Naive thymus-derived CD4-positive, alpha-beta T cell (primary cell): ENCODE measurements at regions of chr16 and their contacts with region 1.

Region 1: DNA sequence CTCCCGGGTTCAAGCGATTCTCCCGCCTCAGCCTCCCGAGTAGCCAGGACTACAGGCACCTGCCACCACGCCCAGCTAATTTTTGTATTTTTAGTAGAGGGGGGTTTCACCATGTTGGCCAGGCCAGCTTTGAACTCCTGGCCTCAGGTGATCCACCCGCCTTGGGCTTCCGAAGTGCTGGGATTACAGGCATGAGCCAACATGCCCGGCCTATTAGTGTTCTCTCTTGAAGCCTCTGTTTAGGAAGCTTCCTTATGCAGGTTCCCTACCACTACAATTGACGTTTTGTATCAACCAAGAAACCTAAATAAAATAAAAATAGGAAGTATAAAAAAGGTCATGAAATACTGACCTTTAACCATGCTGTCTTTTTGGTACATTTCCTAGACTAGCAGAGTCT is 16.0 kb downstream of the CHST5 start:
- DNase-seq: no peak
- ATAC-seq: no peak
- H3K4me3 ChIP-seq: no peak overlapping the region
- H3K4me3 Mint-ChIP-seq: no peak overlapping the region
- H3K27ac ChIP-seq: no peak overlapping the region
- H3K27ac Mint-ChIP-seq: no peak overlapping the region
- H3K4me1 ChIP-seq: peaks cover 0 to 3% of the 10 kb centered on the region in 2 donors
- H3K4me1 Mint-ChIP-seq: peaks cover 5 to 17% (median 13%) of the 10 kb centered on the region in 7 donors
- H3K27me3 ChIP-seq: no peaks in the 10 kb centered on the region
- H3K27me3 Mint-ChIP-seq: peaks cover 0 to 9% (median 0%) of the 10 kb centered on the region in 5 donors

Region 2: DNA sequence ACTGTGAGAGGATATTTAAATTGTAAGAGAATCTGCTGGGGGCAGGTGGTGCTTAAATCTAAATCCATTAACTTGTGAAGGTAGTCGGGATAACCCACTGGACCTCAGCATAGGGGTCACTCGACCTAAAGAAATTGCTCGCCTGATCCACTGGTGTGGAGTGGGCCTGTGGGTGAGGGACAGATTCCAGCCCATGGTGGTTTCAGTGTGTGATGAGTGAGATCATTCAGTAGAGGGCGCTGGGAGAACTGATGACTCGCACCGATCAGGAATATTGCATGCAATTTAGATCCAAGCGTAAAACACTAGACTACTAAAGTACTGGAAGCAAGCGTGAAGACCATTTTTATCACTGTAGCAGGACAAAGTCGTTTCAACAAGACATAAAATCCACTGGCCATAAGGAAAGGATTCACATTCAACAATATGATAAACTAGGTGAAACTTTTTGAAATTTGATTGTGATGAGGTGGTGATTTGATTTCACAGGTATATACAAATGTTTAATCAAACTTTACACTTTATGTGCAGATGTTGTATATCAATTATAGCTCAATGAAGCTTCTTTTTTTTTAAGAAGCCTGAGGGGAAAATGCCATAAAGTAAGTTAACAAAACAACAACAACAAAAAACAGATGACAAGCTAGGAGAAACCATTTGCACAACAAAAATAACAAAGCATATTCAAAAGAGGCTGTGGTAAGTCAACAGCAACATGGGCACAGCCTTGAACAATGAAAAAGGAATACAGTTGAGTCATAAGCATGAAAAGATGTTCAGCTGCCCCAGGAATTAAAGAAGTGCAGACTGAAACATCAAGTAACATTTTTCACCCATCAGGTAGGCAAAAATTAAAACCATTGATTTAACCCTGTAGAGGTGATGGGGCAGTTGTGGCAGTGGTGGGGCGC is 47.9 kb before region 1 on chr16:
- CTCF ChIA-PET with region 1: interaction called, 4 read pairs
- POLR2A ChIA-PET with region 1: interaction called, 5 read pairs
- intact Hi-C with region 1: loop called in 1 of 2 experiments (anchors 1 kb)
- DNase-seq: peak in 6 of 9 donors; percentile 15 to 48 (median 38)
- ATAC-seq: peak; percentile 91
- H3K4me3 ChIP-seq: no peak overlapping the region
- H3K4me3 Mint-ChIP-seq: no peak overlapping the region
- H3K27ac ChIP-seq: no peak overlapping the region
- H3K27ac Mint-ChIP-seq: peak overlapping the region in 1 of 9 donors; percentile 81
- H3K4me1 ChIP-seq: no peaks in the 10 kb centered on the region
- H3K4me1 Mint-ChIP-seq: peaks cover 0 to 6% (median 4%) of the 10 kb centered on the region in 7 donors
- H3K27me3 ChIP-seq: no peaks in the 10 kb centered on the region
- H3K27me3 Mint-ChIP-seq: peaks cover 0 to 5% (median 0%) of the 10 kb centered on the region in 5 donors

Region 3: DNA sequence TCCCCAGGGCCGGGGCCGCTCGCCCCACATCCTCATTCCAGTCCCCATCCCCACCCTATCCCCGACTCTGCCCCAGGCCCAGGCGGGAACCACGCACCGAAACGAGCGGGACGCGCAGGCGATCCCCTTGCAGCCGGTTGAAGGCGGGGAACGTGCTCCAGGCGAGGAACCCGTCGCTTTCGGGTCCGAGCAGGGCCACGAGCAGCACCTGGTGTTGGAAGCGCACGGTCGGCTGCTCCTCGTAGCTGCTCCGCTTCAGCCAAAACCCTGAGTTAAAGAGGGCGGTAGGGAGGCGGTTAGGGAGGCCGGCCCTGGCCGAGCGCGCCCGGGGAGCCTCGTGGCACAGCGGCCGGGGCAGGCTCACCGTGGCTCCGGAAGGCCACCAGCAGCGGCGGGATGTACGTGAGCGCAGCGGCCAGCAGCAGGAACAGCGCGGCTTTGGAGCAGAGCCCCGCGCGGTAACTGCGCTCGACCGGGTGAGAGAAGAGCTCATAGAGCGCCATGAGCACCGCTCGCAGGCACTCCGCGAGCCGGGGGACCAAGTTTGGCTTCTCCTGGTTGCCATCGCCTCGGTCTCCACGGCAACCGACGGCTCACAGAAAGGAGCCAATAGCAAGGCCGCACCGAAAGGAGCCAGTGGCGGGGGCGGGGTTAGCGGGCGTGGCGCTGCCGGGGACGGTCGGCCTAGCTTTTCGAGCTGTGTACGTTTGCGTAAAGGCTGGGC is 36.0 kb after region 1 on chr16 and contains the start of gene TMEM231:
- CTCF ChIA-PET with region 1: interaction called, 4 read pairs
- POLR2A ChIA-PET with region 1: interaction called, 6 read pairs
- intact Hi-C with region 1: loop called (anchors 1 kb)
- DNase-seq: peak; percentile 91 to 97 (median 93)
- ATAC-seq: peak; percentile 98
- H3K4me3 ChIP-seq: peak within 1 kb of the TSS; percentile 84
- H3K4me3 Mint-ChIP-seq: peak within 1 kb of the TSS; percentile 74 to 93 (median 88)
- H3K27ac ChIP-seq: peak within 1 kb of the TSS; percentile 66
- H3K27ac Mint-ChIP-seq: peak within 1 kb of the TSS; percentile 81 to 97 (median 89)
- H3K4me1 ChIP-seq: peaks cover 10% of the 10 kb centered on the region in 2 donors
- H3K4me1 Mint-ChIP-seq: peaks cover 5 to 14% (median 10%) of the 10 kb centered on the region in 7 donors
- H3K27me3 ChIP-seq: no peaks in the 10 kb centered on the region
- H3K27me3 Mint-ChIP-seq: peaks cover 0 to 33% (median 5%) of the 10 kb centered on the region in 5 donors
- total RNA-seq, gene TMEM231: 1.5 to 3.9 (median 3.4) TPM